Cardiac septum (tissue), 1 donor: ENCODE measurements at regions of chr2 and their contacts with region 1.

Region 1: GRCh38 chr2:171893824-171894611 is at the start of gene SLC25A12:
- DNase-seq: peak; percentile 92
- total RNA-seq, gene SLC25A12: 91.2 TPM

Region 2: DNA sequence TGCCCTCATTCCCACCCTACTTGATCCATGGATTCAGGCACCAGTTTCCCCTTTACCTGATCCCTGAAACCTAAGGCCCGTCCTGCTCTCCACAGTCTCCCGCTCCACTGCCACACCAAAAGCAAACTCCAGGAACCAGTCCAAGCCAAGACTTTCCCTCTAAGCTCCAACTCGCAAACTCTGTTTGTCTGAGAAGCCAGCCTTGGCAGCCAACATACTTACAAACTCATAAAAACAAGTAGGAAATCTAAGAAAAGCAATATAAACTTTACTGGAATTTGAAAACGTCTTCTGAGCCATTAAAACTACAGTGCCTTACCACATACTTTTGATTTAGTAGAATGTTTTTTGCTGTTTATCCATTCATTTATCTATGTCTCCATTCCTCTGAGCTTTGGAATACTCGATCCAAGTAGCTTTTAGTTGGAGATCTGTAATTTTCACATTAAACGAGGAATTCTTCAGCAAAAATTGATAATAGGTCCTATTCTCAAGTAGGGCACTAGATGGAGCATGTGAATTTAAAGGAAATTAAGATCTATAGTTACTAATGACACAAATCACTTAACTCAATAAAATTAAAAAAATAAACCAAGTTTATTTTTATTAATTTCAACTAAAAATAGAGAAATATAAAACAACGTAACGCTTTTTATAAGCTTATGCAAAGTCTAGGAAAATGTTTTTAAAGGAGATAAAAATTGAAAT is 1516.4 kb before region 1 on chr2:
- intact Hi-C with region 1: no loop called
- DNase-seq: no peak

Region 3: DNA sequence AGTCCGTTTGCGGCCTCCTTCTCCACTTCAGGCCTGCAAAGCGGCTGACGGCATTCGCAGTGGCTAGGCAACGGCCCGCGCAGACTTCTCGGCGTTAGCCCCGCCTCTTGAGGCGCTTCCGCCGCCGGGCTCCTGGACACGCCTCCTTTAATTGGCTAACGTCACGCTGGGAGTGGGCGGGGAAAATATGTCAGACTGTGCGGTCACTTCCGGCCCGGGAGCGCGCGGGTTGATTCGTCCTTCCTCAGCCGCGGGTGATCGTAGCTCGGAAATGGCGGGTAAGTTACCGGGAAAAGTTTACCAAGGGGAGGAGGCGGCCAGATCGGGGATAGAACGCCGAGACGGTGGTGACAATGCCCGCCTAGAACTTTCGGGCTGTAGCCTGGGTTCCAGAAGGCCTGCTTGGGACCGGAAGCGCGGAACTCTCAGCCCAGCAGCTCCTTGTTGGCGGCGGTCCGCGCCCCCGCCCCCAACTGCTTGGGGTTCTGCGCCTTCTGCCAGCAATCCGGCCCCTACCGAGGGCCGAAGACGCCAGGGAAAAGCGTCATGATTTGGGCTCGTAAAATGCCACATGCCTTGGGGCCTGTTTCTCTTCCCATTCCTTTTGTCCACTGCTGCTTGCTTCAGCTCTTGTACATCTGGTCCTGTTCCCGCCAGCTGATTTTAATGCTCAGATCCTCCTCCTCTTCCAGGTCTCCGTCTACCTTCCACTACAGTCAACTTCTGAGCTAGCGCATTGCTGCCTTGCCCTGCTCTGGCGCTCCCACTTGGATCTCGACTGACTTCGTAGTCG is 28.4 kb after region 1 on chr2 and contains the start of gene HAT1:
- intact Hi-C with region 1: loop called (anchors 2 kb)
- DNase-seq: peak; percentile 99
- total RNA-seq, gene HAT1: 32.7 TPM

Region 4: GRCh38 chr2:172052000-172052983 is 158.3 kb after region 1 on chr2:
- intact Hi-C with region 1: no loop called
- DNase-seq: no peak